ENCODE measurements at regions of chr19 and their contacts with region 1.

Region 1: DNA sequence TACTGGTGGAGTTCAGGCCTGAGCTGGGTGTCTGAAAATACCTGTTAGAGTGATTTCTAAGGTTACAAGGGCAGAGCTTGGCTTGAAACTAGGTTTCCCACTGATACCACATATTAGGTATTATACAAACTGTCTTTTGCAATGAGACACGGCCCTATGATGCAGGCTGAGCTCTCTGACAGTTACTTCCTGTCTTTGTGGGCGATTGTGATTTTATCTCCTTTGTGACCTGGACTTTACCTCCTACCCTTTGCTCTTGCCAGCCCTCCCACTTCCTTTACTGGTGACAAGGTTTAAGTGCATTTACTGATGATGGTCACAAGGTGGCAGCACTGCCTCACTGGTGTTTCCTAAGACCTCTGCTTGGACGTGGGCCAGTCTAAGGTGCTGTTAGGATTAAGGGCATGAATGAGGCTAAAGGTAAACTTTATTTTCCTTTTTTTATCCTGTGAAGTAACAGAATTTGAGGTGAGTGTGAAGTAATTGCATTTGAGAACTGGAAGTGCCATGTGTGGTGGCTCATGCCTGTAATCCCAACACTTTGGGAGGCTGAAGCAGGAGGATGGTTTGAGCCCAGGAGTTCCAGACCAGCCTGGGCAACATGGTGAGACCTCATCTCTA is 7.7 kb upstream of the CXCL17 start:
- DNase-seq: peak; percentile 93
- H3K4me3 Mint-ChIP-seq: no peak overlapping the region
- H3K27ac Mint-ChIP-seq: no peak overlapping the region
- H3K4me1 Mint-ChIP-seq: peaks cover 15% of the 10 kb centered on the region
- H3K27me3 Mint-ChIP-seq: peaks cover 2% of the 10 kb centered on the region

Region 2: GRCh38 chr19:42529248-42529764 is 78.9 kb after region 1 on chr19:
- intact Hi-C with region 1: loop called (anchors 1 kb)
- DNase-seq: peak; percentile 93
- H3K4me3 Mint-ChIP-seq: peak overlapping the region; percentile 84
- H3K27ac Mint-ChIP-seq: peak overlapping the region; percentile 88
- H3K4me1 Mint-ChIP-seq: peaks cover 42% of the 10 kb centered on the region
- H3K27me3 Mint-ChIP-seq: peaks cover 4% of the 10 kb centered on the region